ENCODE measurements at regions of chr2 and their contacts with region 1.

Region 1: DNA sequence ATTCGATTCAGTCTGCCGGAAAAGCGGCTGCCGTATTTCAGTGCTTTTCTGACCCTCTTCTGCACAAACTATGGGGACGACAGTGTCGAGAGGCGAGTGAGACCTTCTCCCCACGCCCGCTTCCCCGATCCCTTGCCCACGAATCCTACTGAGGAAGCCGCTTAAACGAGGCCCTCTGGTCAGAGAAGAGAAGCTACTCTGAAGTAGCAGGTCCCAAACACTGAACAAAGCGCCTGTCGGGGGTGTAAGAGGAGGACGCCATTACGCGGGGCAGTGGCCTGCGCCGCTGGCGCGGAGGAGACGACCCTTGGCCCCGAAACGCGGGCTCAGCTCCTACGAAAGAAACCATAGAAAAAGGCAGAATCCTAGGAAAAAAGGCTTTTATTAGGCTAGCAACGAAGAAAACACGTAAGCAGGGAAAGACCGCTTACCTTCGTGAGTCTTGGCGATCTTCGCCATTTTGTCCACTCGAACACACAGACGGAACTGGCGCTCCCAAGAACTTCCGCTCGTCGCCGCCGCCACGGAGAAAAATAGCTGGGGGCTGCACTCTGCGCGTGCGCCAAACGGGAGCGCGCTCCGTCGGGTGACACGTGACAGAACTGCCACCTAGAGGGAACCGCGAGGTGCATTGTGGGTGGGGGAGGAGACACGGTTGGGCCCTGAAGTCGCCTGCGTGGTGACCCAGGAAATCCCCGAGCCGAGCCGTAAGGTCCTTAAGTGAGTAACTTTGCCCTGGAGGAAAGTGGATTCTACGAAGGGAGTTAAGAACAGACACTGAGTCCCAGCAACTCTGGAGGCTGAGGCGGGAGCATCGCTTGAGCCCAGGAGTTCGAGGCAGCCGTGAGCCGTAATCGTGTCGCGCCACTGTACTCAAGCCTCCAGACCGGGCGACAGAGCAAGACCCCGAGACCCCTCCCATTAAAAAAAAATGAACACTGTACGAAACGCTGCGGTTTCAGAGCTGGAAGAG is at the start of gene SF3B1:
- DNase-seq: peak; percentile 99
- H3K4me3 ChIP-seq: peak within 1 kb of the TSS; percentile 99
- H3K27ac ChIP-seq: peak within 1 kb of the TSS; percentile 76
- H3K4me1 ChIP-seq: peaks cover 42% of the 10 kb centered on the region
- CTCF ChIP-seq: no peak
- total RNA-seq, gene SF3B1: 162 and 198 TPM in 2 replicates

Region 2: GRCh38 chr2:197399887-197400540 is 34.8 kb before region 1 on chr2:
- CTCF ChIA-PET with region 1: no interaction called
- POLR2A ChIA-PET with region 1: no interaction called
- intact Hi-C with region 1: no loop called
- DNase-seq: no peak
- H3K4me3 ChIP-seq: no peak overlapping the region
- H3K27ac ChIP-seq: no peak overlapping the region
- H3K4me1 ChIP-seq: no peaks in the 10 kb centered on the region
- CTCF ChIP-seq: no peak

Region 3: DNA sequence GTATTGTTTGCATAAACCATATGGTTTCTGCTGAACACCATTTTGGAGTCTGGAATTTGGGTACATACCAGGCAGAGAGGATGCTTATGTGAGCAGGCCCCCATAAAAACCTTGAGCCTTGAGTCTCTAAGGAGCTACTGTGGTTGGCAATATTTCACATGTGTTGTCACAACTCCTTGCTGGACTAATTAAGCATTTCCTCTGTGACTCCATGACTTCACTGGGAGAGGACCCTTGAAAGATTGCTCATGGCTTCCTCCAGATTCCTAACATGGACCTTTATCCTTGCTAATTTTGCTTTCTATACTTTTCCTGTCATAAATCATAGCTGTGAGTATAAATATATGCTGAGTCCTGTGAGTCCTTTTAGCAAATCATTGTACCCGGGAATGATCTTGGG is 10.9 kb after region 1 on chr2:
- CTCF ChIA-PET with region 1: no interaction called
- POLR2A ChIA-PET with region 1: interaction called, 41 read pairs
- intact Hi-C with region 1: no loop called
- DNase-seq: no peak
- H3K4me3 ChIP-seq: no peak overlapping the region
- H3K27ac ChIP-seq: no peak overlapping the region
- H3K4me1 ChIP-seq: no peaks in the 10 kb centered on the region
- CTCF ChIP-seq: no peak

Region 4: GRCh38 chr2:197453161-197453914 is 18.5 kb after region 1 on chr2 and contains the start of gene COQ10B:
- CTCF ChIA-PET with region 1: interaction called, 3 read pairs
- POLR2A ChIA-PET with region 1: interaction called, 41 read pairs
- intact Hi-C with region 1: loop called (anchors 1 kb)
- DNase-seq: peak; percentile 100
- H3K4me3 ChIP-seq: peak within 1 kb of the TSS; percentile 84
- H3K27ac ChIP-seq: peak within 1 kb of the TSS; percentile 72
- H3K4me1 ChIP-seq: peaks cover 17% of the 10 kb centered on the region
- CTCF ChIP-seq: peak; percentile 55; the same call in 1 of the 2 replicates
- total RNA-seq, gene COQ10B: 4.5 and 5.0 TPM in 2 replicates

Region 5: GRCh38 chr2:197499594-197500526 is 65.0 kb after region 1 on chr2 and contains the starts of genes HSPD1 and HSPE1:
- CTCF ChIA-PET with region 1: no interaction called
- POLR2A ChIA-PET with region 1: interaction called, 5 read pairs
- intact Hi-C with region 1: loop called (anchors 1 kb)
- DNase-seq: peak; percentile 99
- H3K4me3 ChIP-seq: peak within 1 kb of the TSS; percentile 83
- H3K27ac ChIP-seq: peak within 1 kb of the TSS; percentile 77
- H3K4me1 ChIP-seq: peaks cover 55% of the 10 kb centered on the region
- CTCF ChIP-seq: no peak
- total RNA-seq, gene HSPD1: 370 and 405 TPM in 2 replicates
- total RNA-seq, gene HSPE1: 189 and 314 TPM in 2 replicates